ENCODE measurements at regions of chr20 and their contacts with region 1.

Region 1: DNA sequence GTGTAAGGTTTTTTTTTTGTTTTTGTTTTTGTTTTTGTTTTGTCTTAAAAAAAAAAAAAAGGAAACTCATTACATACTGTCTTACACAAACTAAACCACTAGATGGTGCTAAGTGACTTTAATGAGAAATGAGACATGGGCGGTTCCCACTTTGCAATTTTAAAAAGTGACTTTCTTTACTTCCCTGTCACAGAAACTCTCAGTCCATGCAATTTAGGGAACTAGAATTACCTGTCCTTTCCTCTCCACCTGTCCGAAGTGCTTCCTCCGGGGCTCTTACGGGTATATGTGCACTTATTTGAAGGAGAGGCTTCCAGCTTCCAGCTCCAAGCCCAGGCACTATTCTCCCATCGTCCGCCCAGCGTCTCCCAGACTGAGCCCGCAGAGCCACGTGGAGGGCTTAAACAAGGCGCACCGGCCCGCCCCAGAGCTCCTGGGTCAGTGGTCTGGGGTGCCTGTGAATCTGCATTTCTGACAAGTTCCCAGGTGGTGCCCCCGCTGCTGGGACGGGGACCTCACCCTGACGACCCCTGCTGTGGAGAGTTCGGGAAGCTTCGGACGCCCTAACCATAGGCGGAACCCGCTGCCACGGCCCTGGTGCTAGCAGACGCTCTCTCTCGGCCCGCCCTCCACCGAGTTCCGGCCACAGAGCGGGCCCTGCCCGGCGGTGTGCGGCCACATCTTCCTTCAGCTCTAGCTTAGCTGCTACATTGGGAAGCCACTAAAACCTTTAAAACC is 26.1 kb downstream of the BFSP1 start:
- DNase-seq: no peak
- H3K4me3 ChIP-seq: peak overlapping the region; percentile 58
- H3K27ac ChIP-seq: no peak overlapping the region
- H3K27me3 ChIP-seq: peaks cover 7% of the 10 kb centered on the region
- CTCF ChIP-seq: peak; percentile 64

Region 2: GRCh38 chr20:17518339-17519052 is 13.4 kb after region 1 on chr20:
- CTCF ChIA-PET with region 1: interaction called, 10 read pairs
- POLR2A ChIA-PET with region 1: no interaction called
- DNase-seq: no peak
- H3K4me3 ChIP-seq: no peak overlapping the region
- H3K27ac ChIP-seq: no peak overlapping the region
- H3K27me3 ChIP-seq: no peaks in the 10 kb centered on the region
- CTCF ChIP-seq: no peak

Region 3: GRCh38 chr20:17617551-17618223 is 112.6 kb after region 1 on chr20:
- CTCF ChIA-PET with region 1: interaction called, 11 read pairs
- POLR2A ChIA-PET with region 1: no interaction called
- DNase-seq: no peak
- H3K4me3 ChIP-seq: no peak overlapping the region
- H3K27ac ChIP-seq: peak overlapping the region; percentile 39
- H3K27me3 ChIP-seq: no peaks in the 10 kb centered on the region
- CTCF ChIP-seq: peak; percentile 57

Region 4: DNA sequence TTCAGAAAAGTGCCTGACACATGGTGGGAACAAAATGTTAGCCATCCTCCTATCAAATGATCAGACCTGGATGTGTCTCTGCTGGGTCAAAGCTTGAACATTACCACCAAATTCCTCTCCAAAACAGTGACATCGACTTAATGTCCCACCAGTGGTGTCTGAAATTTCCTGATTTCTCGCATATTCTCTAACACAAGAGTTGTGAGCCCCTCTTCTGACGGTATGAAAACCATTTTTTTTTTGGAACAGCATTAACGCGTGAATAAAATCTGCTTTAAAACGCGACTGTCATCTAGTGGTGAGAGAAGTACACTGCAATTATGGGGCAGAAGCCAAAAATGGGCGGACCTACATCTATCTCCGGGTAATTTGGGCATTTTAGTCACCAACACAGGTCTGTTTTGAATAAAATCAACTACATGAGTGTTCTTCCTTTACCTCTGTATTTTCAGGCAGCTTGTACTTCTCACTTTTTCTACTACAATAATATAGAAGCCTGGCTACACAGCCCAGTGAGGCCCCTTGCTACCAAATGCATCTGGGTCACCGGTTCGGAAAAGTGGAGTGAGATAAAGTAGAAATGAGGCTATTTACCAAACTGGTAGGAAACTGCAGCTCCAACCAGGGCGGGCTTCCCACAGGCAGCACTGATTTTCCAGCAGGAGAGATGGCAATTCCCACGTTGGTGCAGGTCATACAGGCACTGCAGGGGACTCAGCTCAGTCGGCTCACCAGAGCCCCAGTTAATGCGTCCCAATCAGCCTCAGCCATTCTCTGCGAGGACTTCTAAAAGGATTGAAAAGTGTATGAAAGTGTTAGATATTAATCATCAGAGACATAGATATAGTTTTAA is 491.1 kb after region 1 on chr20:
- CTCF ChIA-PET with region 1: interaction called, 44 read pairs
- POLR2A ChIA-PET with region 1: no interaction called
- DNase-seq: no peak
- H3K4me3 ChIP-seq: no peak overlapping the region
- H3K27ac ChIP-seq: no peak overlapping the region
- H3K27me3 ChIP-seq: no peaks in the 10 kb centered on the region
- CTCF ChIP-seq: peak; percentile 99